Activated CD4-positive, alpha-beta T cell treated with anti-CD3 and anti-CD28 coated beads, Interleukin-2, amount 10 ng/mL, durations not matched to agents 24 days and 14 days (primary cell): ENCODE measurements at regions of chr4 and their contacts with region 1.

Region 1: DNA sequence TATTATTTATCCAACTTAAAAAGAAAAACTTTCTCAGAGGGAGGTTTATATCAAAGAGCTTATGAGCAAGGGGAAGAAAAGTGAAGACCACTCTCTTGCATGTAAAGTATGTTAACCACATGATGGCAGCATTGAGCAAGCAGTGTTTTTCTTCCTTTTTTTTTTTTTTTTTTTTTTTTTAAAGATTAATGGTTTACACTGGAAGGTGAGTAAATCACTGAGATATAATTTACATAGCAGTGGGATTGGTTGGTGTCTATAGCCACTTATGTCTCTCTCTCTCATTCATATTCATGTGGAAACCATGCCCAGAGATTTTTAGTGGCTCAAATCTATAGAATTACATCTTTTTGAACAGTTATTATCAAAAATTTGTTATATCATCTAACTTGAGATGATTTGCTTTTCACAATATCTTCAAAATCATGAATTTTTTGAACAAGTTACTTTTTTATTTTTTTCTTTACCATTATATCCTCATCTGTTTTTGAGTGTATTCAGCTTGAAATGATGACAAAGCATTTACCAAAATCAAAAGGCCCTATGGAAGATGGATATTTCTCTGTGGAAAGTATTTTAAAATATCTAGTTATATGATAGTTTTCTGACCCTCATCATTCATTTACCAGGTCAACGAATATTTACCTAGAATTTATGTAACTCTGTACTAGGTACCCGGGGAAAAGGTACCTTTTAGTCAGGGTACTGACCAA is 31.6 kb downstream of the MTHFD2L start:
- DNase-seq: peak; percentile 57
- H3K4me3 Mint-ChIP-seq: no peak overlapping the region
- H3K27ac Mint-ChIP-seq: no peak overlapping the region
- H3K4me1 Mint-ChIP-seq: no peaks in the 10 kb centered on the region
- H3K27me3 Mint-ChIP-seq: peaks cover 1% of the 10 kb centered on the region

Region 2: DNA sequence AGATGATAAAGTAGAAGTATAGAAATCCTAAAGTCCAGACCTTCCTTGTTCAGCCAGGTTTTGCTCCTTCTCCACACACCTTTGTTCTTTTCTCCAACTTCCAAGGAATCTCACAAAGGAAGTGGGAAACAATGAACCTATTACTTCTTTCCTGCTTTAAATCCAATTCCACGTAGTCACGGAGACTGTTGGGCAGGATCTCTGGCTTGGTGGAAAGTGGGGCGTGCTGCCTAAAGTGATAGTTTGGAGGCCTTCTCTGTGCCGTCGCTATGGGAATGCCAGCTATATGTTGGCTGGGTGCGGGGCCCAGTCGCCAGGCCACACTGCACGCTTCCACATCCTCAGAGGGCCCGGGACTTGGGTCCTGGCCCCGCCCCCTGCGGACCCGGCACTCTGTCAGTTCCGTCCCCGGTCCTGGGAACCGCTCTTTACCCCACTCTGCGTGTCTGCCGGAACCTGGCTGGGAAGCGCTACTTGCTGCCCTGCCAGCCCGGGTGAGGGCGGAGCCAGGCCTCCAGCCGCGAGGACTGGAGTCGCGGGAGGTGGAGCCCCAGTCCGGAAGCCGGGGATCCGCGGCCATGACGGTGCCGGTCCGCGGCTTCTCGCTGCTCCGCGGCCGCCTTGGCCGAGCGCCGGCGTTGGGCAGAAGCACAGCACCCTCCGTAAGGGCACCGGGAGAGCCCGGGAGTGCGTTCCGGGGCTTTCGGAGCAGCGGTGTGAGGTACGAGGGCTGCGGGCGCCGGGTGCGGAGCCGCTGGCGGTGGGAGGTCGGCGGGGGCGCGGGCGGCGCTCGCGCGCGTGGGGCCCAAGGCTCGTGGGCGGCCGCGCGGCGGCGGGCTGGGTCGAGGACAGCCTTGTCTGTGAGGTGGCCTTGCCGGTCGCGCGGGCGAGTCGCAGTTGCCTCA is 31.7 kb before region 1 on chr4 and contains the start of gene MTHFD2L:
- intact Hi-C with region 1: no loop called
- DNase-seq: peak; percentile 96
- H3K4me3 Mint-ChIP-seq: peak within 1 kb of the TSS; percentile 85
- H3K27ac Mint-ChIP-seq: peak within 1 kb of the TSS; percentile 90
- H3K4me1 Mint-ChIP-seq: peaks cover 16% of the 10 kb centered on the region
- H3K27me3 Mint-ChIP-seq: peaks cover 26% of the 10 kb centered on the region
- total RNA-seq, gene MTHFD2L: 9.4 and 10.0 TPM in 2 replicates

Region 3: DNA sequence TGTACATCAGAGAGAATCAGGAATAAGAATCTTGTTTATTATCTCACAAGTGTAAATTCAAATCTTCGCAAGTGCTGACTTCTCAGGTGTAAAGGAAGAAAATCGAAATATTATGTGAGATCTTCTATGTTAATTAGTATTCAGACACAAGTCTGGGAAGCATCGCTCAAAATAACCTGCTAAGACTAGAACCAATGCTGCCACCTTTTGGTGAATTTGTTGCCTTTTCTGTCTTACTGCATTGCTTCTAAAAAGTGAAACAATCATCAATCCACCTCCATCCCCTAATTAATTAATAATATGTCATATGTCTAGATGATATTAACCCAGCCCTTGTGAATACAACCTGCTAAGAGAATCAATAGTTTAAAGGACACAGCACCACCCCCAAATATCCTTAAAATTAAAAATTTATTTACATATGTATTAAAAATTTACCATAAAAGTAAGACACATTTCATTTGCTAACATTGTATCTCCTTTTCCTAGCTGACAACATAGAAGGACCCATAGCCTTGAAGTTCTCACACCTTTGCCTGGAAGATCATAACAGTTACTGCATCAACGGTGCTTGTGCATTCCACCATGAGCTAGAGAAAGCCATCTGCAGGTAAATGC is 122.3 kb after region 1 on chr4:
- intact Hi-C with region 1: loop called (anchors 1 kb)
- DNase-seq: peak; percentile 75
- H3K4me3 Mint-ChIP-seq: no peak overlapping the region
- H3K27ac Mint-ChIP-seq: no peak overlapping the region
- H3K4me1 Mint-ChIP-seq: peaks cover 6% of the 10 kb centered on the region
- H3K27me3 Mint-ChIP-seq: peaks cover 2% of the 10 kb centered on the region